ENCODE measurements at regions of chr19 and their contacts with region 1.

Region 1: GRCh38 chr19:49570138-49570856 is 10.1 kb downstream of the NOSIP start:
- DNase-seq: no peak
- H3K4me3 ChIP-seq: no peak overlapping the region
- CTCF ChIP-seq: peak; percentile 79

Region 2: DNA sequence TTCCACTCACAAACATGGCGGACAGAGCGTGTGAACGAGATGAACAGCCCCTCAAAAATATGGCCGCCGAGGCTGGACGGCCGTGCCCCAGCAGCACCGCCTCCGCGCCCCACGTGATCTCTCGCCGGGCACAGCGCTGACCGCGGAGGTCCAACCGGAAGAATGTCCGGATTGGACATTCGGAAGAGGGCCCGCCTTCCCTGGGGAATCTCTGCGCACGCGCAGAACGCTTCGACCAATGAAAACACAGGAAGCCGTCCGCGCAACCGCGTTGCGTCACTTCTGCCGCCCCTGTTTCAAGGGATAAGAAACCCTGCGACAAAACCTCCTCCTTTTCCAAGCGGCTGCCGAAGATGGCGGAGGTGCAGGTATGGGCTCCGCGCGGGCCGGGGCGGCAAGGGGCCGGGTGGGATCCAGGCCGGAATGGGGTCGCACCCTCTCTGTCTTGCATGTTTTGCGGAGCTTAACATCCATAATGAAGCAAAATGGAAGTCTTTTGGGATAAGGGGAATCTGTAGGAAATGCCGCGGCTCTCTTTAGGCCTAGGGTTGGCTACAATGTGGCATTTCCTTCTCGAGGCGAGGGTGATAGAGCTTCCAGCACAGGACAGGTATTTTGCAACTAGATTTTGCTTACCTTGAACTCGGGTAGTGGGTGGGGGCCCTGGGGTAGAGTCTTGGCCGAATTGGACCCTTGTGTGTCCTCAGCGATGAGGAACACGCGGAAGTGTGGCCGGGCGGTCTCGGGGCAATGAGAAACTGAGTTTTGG is 82.8 kb before region 1 on chr19 and contains the start of gene RPL13A:
- CTCF ChIA-PET with region 1: interaction called, 11 read pairs
- POLR2A ChIA-PET with region 1: no interaction called
- DNase-seq: peak; percentile 91
- H3K4me3 ChIP-seq: peak within 1 kb of the TSS; percentile 90
- CTCF ChIP-seq: no peak

Region 3: DNA sequence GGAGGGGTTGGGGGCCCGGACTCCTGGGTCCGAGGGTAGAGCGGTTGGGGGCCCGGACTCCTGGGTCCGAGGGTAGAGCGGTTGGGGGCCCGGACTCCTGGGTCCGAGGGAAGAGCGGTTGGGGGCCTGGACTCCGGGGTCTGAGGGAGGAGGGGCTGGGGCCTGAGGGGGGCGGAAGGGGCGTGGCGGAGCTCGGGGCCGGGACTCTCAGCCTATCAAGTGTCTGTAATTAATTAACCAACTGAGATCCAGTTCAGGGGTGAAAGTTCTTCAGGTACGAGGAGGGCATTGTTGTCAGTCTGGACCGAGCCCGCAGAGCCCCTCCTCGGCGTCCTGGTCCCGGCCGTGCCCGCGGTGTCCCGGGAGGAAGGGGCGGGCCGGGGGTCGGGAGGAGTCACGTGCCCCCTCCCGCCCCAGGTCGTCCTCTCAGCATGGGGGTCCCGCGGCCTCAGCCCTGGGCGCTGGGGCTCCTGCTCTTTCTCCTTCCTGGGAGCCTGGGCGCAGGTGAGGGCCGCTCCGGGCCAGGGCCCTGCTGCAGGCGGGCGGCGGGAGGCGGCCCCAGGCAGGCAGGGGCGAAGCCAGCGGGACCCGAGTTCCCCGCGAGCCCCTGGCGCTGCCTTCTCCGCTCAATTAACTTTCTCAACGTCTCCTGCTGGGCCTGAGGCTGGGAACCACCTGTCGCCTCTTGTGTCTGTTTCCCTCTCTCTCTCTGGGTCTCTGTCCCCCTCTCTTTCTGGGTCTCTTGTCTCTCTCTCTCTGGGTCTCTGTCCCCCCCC is 57.1 kb before region 1 on chr19:
- CTCF ChIA-PET with region 1: interaction called, 197 read pairs
- POLR2A ChIA-PET with region 1: no interaction called
- DNase-seq: no peak
- H3K4me3 ChIP-seq: peak overlapping the region; percentile 56
- CTCF ChIP-seq: no peak

Region 4: DNA sequence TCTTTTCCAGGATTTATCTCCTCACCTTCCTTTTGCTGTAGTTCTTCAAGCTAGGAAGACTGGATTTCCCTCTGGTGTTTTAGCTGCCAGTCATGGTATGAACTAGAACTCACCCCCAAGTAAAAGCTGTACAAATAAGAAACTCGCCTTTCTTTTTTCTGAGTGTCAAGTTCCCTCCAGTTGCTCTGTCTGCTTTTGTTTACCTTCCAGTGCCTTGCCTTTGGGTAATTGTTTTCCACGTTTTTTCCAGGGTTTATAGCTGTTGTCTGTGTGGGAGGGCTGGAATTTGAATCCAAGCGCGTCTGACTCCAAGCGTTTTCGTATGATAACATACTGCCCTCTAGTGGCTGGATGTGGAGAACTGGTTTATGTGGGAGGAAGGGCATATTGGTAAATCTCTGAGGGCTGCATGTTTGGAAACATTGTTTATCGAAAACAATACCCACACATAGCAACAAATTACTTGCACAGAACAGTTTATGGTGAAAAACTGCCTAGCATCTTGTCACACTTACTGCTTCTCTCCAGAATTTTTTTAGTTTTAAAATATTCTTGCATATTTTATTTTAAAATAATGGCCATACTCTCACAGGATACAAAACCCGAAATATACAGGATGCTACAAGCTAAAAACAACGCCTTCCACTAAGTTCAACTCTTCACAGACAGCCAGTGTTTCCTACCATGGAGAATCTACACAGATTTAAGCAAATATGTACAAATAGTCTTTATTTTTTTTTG is 23.3 kb before region 1 on chr19:
- CTCF ChIA-PET with region 1: interaction called, 200 read pairs
- POLR2A ChIA-PET with region 1: no interaction called
- DNase-seq: no peak
- H3K4me3 ChIP-seq: no peak overlapping the region
- CTCF ChIP-seq: peak; percentile 64

Region 5: GRCh38 chr19:49580264-49581006 is 10.1 kb after region 1 on chr19 and contains the start of gene NOSIP:
- CTCF ChIA-PET with region 1: interaction called, 124 read pairs
- POLR2A ChIA-PET with region 1: interaction called, 7 read pairs
- DNase-seq: peak; percentile 84
- H3K4me3 ChIP-seq: peak within 1 kb of the TSS; percentile 84
- CTCF ChIP-seq: no peak

Region 6: GRCh38 chr19:49655570-49656455 is 85.5 kb after region 1 on chr19:
- CTCF ChIA-PET with region 1: no interaction called
- POLR2A ChIA-PET with region 1: no interaction called
- DNase-seq: no peak
- H3K4me3 ChIP-seq: no peak overlapping the region
- CTCF ChIP-seq: no peak

Region 7: DNA sequence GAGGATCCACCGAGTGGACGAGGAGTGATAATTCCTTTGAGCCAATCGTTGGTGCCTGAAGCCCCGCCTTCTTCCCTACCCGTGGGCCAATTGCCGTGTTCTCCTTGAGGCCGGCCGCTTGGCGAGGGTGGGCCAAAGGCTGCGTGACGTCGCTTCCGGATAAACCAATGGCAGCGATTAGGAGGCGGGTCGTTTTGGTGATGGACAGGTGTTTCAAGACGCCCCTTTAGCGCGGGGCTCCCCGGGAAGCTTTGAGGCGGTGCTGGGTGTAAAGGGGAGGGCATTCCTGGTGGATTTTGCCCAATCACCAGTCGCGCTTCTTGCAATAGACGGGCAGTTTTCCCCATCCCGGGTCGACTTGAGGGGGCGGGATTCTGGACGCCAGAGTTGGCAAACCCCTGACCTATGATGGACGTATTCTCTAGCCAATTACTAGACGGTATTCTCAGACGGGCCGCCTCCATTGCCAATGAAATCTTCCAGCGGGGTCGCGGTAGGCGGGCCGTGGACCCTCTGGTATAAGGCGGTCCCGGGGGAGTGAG is 106.5 kb after region 1 on chr19:
- CTCF ChIA-PET with region 1: interaction called, 37 read pairs
- POLR2A ChIA-PET with region 1: no interaction called
- DNase-seq: peak; percentile 99
- H3K4me3 ChIP-seq: peak overlapping the region; percentile 99
- CTCF ChIP-seq: no peak

Measured in AG04449 (cell line).